Gastrocnemius medialis (tissue), 4 donors: ENCODE measurements at regions of chr14 and their contacts with region 1.

Region 1: GRCh38 chr14:20682435-20683124 is 1.8 kb upstream of the RNASE4 start:
- DNase-seq: peak; percentile 83 to 85
- ATAC-seq: peak; percentile 77 to 84
- H3K4me3 ChIP-seq: peak overlapping the region; percentile 69 to 98 (median 87)
- H3K27ac ChIP-seq: peak overlapping the region; percentile 95 to 100 (median 97)
- H3K4me1 ChIP-seq: peaks cover 11 to 20% of the 10 kb centered on the region in 2 donors
- H3K27me3 ChIP-seq: no peaks in the 10 kb centered on the region
- CTCF ChIP-seq: no peak
- POLR2A ChIP-seq: peak; percentile 93 to 94

Region 2: DNA sequence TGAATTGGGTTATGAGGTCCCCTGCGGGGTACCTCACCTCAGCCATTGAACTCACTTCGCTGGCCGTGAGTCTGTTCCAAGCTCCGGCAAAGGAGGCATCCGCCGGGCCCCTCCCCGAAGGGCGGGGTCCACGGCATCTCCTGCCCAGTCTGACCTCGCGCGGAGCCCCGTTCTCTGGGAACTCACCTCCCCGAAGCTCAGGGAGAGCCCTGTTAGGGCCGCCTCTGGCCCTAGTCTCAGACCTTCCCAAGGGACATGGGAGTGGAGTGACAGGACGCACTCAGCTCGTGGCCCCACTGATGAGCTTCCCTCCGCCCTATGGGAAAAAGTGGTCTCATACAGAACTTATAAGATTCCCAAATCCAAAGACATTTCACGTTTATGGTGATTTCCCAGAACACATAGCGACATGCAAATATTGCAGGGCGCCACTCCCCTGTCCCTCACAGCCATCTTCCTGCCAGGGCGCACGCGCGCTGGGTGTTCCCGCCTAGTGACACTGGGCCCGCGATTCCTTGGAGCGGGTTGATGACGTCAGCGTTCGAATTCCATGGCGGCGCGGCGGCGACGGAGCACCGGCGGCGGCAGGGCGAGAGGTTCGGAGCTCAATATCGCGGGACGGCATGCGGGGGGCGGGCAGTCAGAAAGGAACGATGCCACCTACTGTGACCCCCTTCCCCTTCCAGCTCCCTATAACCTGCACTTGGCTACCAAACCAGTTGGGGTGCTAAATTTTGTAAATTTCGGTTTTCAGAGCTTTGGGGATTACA is 339.3 kb before region 1 on chr14 and contains the start of gene PARP2:
- in situ Hi-C with region 1: loop called in 3 of 4 experiments (anchors 10 to 25 kb)
- intact Hi-C with region 1: loop called (anchors 2 kb)
- DNase-seq: peak; percentile 97 to 98
- ATAC-seq: peak; percentile 96 to 97
- H3K4me3 ChIP-seq: peak within 1 kb of the TSS; percentile 74 to 83 (median 78)
- H3K27ac ChIP-seq: peak within 1 kb of the TSS; percentile 88 to 94 (median 92)
- H3K4me1 ChIP-seq: peaks cover 5 to 10% of the 10 kb centered on the region in 2 donors
- H3K27me3 ChIP-seq: no peaks in the 10 kb centered on the region
- CTCF ChIP-seq: no peak
- POLR2A ChIP-seq: peak; percentile 90 to 97
- total RNA-seq, gene PARP2: 5.1 to 15.0 (median 7.0) TPM

Region 3: DNA sequence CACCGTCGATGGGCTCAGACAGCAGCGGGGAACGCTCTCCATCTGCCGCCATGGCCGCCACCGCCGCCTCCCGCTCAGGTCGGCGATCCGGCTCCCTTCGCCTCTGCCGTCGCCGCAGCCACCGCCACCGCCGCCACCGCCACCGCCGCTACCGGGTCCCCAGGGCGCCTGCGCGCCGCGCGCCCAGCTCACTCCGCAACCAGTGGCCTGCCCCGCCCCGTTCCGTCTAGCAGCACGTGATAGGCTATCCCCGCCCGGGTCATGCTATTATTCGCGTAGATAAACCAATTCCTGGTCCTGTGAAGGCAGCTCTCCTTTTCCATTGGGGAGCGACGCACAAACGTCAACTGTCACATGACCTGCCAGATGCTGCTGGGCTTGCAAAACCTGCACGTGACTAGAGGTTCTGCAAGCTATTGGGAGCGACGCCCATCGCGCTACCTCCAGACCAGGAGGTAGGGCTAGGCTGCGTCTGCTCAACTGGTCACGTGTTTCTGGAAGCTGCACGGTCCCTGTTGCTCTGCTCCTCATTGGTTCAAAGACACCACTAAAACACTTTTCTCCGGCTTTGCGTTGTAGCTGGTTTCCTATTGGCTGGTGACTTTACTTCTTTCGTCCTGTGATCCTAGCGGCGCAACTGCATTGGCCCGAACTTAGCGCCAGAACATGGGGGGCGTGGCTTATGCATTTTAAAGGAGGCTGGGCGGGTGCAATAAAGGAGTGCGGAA is 221.1 kb before region 1 on chr14 and contains the start of gene PIP4P1:
- in situ Hi-C with region 1: loop called in 1 of 4 experiments (anchors 10 kb)
- intact Hi-C with region 1: loop called (anchors 2 kb)
- DNase-seq: peak; percentile 100
- ATAC-seq: peak; percentile 96 to 97
- H3K4me3 ChIP-seq: peak within 1 kb of the TSS; percentile 93 to 99 (median 96)
- H3K27ac ChIP-seq: peak within 1 kb of the TSS; percentile 98 to 99 (median 98)
- H3K4me1 ChIP-seq: peaks cover 15 to 16% of the 10 kb centered on the region in 2 donors
- H3K27me3 ChIP-seq: no peaks in the 10 kb centered on the region
- CTCF ChIP-seq: peak in 2 of 5 experiments; percentile 20 to 39
- POLR2A ChIP-seq: peak; percentile 97 to 99
- total RNA-seq, gene PIP4P1: 18.8 to 38.5 (median 21.7) TPM

Region 4: GRCh38 chr14:20714593-20715250 is 32.1 kb after region 1 on chr14:
- in situ Hi-C with region 1: no loop called
- intact Hi-C with region 1: no loop called
- DNase-seq: peak; percentile 54 to 64
- ATAC-seq: peak; percentile 41 to 62
- H3K4me3 ChIP-seq: no peak overlapping the region
- H3K27ac ChIP-seq: peak overlapping the region in 1 of 4 donors; percentile 19
- H3K4me1 ChIP-seq: peaks cover 0 to 4% of the 10 kb centered on the region in 2 donors
- H3K27me3 ChIP-seq: no peaks in the 10 kb centered on the region
- CTCF ChIP-seq: no peak
- POLR2A ChIP-seq: no peak

Region 5: GRCh38 chr14:20970983-20971704 is 288.6 kb after region 1 on chr14:
- in situ Hi-C with region 1: no loop called
- intact Hi-C with region 1: loop called (anchors 5 kb)
- DNase-seq: peak; percentile 62 to 74
- ATAC-seq: peak; percentile 92 to 93
- H3K4me3 ChIP-seq: peak overlapping the region; percentile 68 to 80 (median 71)
- H3K27ac ChIP-seq: peak overlapping the region; percentile 40 to 67 (median 59)
- H3K4me1 ChIP-seq: peaks cover 5 to 7% of the 10 kb centered on the region in 2 donors
- H3K27me3 ChIP-seq: no peaks in the 10 kb centered on the region
- CTCF ChIP-seq: peak; percentile 77 to 88 (median 84)
- POLR2A ChIP-seq: no peak

Region 6: GRCh38 chr14:21098076-21098891 is 415.7 kb after region 1 on chr14 and contains the start of gene ZNF219:
- in situ Hi-C with region 1: loop called in 2 of 4 experiments (anchors 25 kb)
- intact Hi-C with region 1: loop called (anchors 5 kb)
- DNase-seq: peak; percentile 34 to 48
- ATAC-seq: peak; percentile 48 to 50
- H3K4me3 ChIP-seq: peak within 1 kb of the TSS; percentile 71 to 93 (median 76)
- H3K27ac ChIP-seq: peak within 1 kb of the TSS; percentile 92 to 96 (median 94)
- H3K4me1 ChIP-seq: peaks cover 20 to 30% of the 10 kb centered on the region in 2 donors
- H3K27me3 ChIP-seq: no peaks in the 10 kb centered on the region
- CTCF ChIP-seq: peak in 2 of 5 experiments; percentile 28 to 35
- POLR2A ChIP-seq: no peak
- total RNA-seq, gene ZNF219: 25.9 to 48.9 (median 43.9) TPM

Region 7: DNA sequence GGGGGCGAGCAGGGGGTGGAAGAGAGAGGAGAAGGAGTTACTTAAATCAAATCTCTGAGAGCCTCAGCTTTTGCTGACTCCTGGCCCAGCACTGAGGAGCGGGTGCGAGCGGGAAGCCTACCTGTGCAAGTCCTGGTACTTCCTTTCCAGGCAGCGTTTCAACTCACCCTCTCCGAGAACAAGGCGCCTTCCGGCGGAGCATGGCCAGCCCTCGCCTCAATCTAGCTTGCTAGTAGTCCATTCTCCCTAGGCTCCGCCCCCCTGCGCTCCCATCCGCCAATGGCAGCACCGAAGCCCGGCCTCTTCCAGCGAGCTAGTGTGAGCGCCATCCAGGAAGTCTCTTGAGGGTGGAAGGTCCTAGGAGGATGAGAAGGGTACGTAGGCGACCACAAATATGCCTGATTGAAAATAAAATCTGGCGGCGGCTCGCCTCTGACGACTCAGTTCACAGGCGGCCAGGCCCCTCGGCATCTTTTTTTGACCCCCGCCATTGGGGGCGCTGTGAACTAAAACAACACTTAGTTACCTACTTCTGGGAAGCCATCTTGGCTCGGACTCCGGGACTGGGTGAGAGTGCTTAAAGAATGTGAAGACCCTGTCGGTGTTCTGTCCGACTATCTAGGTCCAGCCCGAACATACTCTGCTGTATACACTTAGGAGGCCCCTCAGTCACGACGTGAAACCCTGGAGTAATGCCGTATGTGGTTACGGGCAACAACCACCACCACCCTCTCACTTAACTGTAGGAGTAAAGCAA is 773.5 kb after region 1 on chr14 and contains the start of gene CHD8:
- in situ Hi-C with region 1: no loop called
- intact Hi-C with region 1: loop called (anchors 10 kb)
- DNase-seq: peak; percentile 99 to 100
- ATAC-seq: peak; percentile 98 to 99
- H3K4me3 ChIP-seq: peak within 1 kb of the TSS; percentile 68 to 97 (median 92)
- H3K27ac ChIP-seq: peak within 1 kb of the TSS; percentile 88 to 98 (median 94)
- H3K4me1 ChIP-seq: peaks cover 12 to 15% of the 10 kb centered on the region in 2 donors
- H3K27me3 ChIP-seq: no peaks in the 10 kb centered on the region
- CTCF ChIP-seq: peak; percentile 41 to 61 (median 54)
- POLR2A ChIP-seq: peak; percentile 27 to 58
- total RNA-seq, gene CHD8: 23.8 to 49.5 (median 37.6) TPM